ENCODE measurements at regions of chr4 and their contacts with region 1.

Region 1: DNA sequence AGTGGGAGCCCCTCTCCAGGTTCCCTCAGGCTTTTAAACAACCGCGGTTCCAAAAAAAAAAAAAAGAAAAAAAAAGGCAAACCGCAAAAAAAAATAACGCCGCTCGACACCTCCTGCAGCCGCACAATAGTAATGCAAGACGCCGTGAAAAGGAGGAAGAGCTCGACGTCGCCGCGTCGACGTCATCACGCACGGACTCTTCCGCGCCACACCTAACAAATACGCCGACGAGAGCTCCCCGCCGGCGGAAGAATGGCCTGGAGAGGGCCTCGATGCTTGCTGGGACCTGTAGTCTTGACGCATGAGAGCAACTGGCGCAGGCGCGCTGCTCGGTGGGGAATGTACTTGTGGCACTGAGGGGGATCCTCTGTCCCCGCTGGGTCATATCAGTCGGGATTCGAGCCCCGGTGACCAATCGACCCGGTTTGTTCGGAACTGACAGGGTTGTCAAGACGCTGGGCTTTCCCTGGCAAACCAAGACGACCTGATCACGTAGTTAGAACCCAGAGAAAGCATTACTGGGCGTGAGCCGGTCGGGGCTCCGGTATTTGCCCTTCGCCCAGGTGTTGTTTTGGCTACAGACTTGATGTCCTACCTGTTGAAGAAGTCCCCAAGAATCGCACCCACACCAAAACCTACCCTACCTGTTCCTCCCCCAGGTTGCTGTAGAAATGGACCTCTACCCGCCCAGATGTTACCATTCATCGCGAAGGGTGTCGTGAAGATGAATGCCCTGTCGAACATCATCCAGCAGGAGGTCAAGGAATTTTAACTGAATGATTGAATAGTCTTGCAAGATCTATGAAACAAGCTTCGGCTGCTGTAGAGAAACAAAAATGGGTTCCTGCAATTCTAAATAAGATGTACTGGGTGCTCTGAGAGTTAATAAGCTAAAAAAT is at the start of gene CBR4:
- DNase-seq: peak; percentile 95
- ATAC-seq: peak; percentile 75
- H3K4me3 ChIP-seq: peak within 1 kb of the TSS; percentile 87
- H3K27ac ChIP-seq: peak within 1 kb of the TSS; percentile 98
- H3K4me1 ChIP-seq: peaks cover 84% of the 10 kb centered on the region
- H3K27me3 ChIP-seq: no peaks in the 10 kb centered on the region
- CTCF ChIP-seq: no peak; the same call in 1 of the 2 replicates
- total RNA-seq, gene CBR4: 7.4 and 12.6 TPM in 2 replicates

Region 2: GRCh38 chr4:168279556-168279955 is 730.8 kb before region 1 on chr4:
- CTCF ChIA-PET with region 1: no interaction called
- POLR2A ChIA-PET with region 1: no interaction called
- intact Hi-C with region 1: no loop called
- DNase-seq: no peak
- ATAC-seq: no peak
- H3K4me3 ChIP-seq: no peak overlapping the region
- H3K27ac ChIP-seq: no peak overlapping the region
- H3K4me1 ChIP-seq: no peaks in the 10 kb centered on the region
- H3K27me3 ChIP-seq: no peaks in the 10 kb centered on the region
- CTCF ChIP-seq: no peak

Region 3: DNA sequence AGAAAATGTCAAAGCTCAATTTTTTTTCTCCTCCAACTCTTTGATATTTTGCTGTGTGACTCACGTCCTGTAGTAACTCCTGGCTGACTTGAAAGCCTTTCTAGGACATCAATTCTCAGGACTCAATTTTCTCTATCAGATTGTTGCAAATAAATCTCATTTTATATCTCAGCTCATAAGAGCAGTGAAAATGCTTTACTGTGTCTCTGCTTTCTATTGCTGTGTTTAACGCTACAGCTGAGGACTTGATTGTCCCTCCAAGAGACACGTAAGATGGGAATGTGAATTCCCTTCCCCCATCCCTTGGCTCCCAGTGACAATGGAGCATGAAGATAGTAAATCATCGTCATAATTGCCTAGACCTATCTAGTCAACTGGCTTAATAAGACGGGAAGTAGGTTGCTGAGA is 20.2 kb after region 1 on chr4:
- CTCF ChIA-PET with region 1: interaction called, 6 read pairs
- POLR2A ChIA-PET with region 1: interaction called, 14 read pairs
- intact Hi-C with region 1: no loop called
- DNase-seq: peak; percentile 43
- ATAC-seq: peak; percentile 53
- H3K4me3 ChIP-seq: peak overlapping the region; percentile 37
- H3K27ac ChIP-seq: peak overlapping the region; percentile 64
- H3K4me1 ChIP-seq: peaks cover 17% of the 10 kb centered on the region
- H3K27me3 ChIP-seq: no peaks in the 10 kb centered on the region
- CTCF ChIP-seq: no peak

Region 4: GRCh38 chr4:169092889-169093522 is 82.6 kb after region 1 on chr4:
- CTCF ChIA-PET with region 1: no interaction called
- POLR2A ChIA-PET with region 1: no interaction called
- intact Hi-C with region 1: loop called (anchors 2 kb)
- DNase-seq: peak; percentile 43
- ATAC-seq: peak; percentile 95
- H3K4me3 ChIP-seq: no peak overlapping the region
- H3K27ac ChIP-seq: peak overlapping the region; percentile 77
- H3K4me1 ChIP-seq: peaks cover 17% of the 10 kb centered on the region
- H3K27me3 ChIP-seq: no peaks in the 10 kb centered on the region
- CTCF ChIP-seq: no peak

Region 5: DNA sequence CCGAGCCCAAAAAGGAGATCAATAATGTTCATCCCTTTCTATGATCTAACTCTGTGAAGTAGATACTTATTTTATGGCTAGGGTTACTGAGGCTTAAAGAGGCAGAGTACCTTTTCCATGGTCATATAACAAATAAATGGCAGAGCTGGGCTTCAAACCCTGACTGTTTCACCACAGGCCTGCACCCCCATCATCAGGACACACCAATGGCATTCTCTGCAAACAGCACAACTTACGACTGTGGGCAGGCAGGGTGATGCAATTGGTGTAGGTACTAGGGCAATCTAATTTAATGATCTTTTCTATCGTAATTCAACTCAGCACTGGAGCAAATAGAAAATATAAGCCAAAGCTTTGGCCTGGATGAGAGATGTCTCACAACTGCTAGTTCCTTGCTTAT is 118.5 kb after region 1 on chr4:
- CTCF ChIA-PET with region 1: no interaction called
- POLR2A ChIA-PET with region 1: interaction called, 13 read pairs
- intact Hi-C with region 1: no loop called
- DNase-seq: no peak
- ATAC-seq: no peak
- H3K4me3 ChIP-seq: no peak overlapping the region
- H3K27ac ChIP-seq: no peak overlapping the region
- H3K4me1 ChIP-seq: no peaks in the 10 kb centered on the region
- H3K27me3 ChIP-seq: no peaks in the 10 kb centered on the region
- CTCF ChIP-seq: no peak

Measured in PC-3 (cell line).